ENCODE measurements at regions of chr10 and their contacts with region 1.

Region 1: DNA sequence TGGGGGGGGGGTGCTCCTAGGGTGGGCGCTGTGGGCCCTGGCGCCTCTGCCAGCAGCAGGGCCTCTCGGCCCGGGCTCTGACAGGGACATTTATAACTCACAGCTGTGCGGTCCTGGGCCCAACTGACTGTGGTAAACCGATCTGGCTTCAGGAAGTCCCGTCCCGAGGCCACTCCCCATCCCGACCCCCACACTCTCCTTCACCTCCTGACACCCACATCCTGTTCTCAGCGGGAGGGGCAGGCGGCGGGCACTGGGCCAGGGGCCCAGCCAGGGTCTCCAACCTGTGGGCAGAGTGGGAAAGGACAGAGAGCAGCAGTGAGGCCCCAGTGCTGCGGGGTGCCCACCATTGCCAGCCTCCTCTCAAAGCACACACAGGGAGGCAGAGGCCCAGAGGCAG is 69.1 kb downstream of the ZMIZ1 start:
- DNase-seq: no peak
- H3K4me3 ChIP-seq: no peak overlapping the region
- H3K27ac ChIP-seq: peak overlapping the region; percentile 63 to 66
- H3K4me1 ChIP-seq: peaks cover 5% of the 10 kb centered on the region
- H3K27me3 ChIP-seq: no peaks in the 10 kb centered on the region
- CTCF ChIP-seq: no peak
- POLR2A ChIP-seq: no peak

Region 2: DNA sequence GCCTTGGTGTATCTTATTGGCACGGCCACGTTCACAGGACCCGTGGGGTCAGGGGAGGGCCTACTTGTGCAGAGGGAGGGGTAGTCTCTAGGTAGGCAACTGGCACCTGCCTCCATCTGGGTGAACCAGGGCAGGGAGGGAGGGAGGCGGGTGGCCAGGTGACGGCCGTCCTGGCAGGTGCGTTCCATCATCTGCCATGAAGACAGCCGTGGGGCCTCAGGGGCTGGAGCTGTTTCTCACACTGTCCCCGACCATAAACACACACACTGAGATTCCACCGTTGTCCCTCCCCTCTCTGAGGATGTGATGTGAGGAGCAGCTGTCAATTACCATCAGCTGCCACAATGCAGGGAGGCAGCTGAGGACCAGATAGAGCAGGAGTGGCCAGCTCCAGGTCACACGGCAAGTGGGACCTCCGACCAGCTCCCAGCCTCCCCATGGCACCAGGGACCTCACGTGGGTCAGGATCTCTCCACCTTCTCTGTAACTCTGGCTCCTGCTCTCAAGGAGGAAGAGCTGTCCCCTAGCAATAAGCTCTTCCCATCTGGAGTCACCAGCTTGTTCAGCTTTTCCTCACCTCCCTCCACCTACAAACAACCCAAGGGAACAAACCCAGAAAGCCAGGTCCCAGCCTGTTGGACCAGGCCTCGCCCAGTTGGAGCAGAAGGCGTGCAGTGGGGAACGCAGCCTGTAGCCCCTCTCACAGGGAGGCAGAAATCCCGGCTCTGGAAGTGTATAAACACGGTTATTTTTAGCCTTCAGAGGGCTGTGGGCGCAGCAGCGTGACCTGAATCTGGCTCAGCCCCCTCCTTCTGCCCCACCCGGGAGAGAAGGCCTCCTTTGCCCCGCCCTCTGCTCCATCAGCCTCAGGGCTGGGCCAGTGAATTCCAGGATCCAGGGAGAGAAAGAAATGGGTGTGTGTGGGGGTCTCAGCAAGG is 36.0 kb before region 1 on chr10:
- intact Hi-C with region 1: loop called (anchors 5 kb)
- DNase-seq: peak; percentile 37
- H3K4me3 ChIP-seq: no peak overlapping the region
- H3K27ac ChIP-seq: peak overlapping the region; percentile 48 to 75
- H3K4me1 ChIP-seq: peaks cover 34% of the 10 kb centered on the region
- H3K27me3 ChIP-seq: no peaks in the 10 kb centered on the region
- CTCF ChIP-seq: no peak
- POLR2A ChIP-seq: no peak